Vagina (tissue), 2 donors: ENCODE measurements at regions of chr14 and their contacts with region 1.

Region 1: GRCh38 chr14:59407246-59408010 is 57.8 kb downstream of the GPR135 start:
- DNase-seq: no peak
- H3K4me3 ChIP-seq: no peak overlapping the region
- H3K27ac ChIP-seq: peak overlapping the region; percentile 68
- H3K4me1 ChIP-seq: peaks cover 15% of the 10 kb centered on the region
- H3K27me3 ChIP-seq: no peaks in the 10 kb centered on the region
- CTCF ChIP-seq: no peak
- POLR2A ChIP-seq: no peak

Region 2: GRCh38 chr14:59262717-59263454 is 144.5 kb before region 1 on chr14:
- intact Hi-C with region 1: no loop called
- DNase-seq: no peak
- H3K4me3 ChIP-seq: no peak overlapping the region
- H3K27ac ChIP-seq: no peak overlapping the region
- H3K4me1 ChIP-seq: peaks cover 8% of the 10 kb centered on the region
- H3K27me3 ChIP-seq: no peaks in the 10 kb centered on the region
- CTCF ChIP-seq: no peak
- POLR2A ChIP-seq: no peak

Region 3: DNA sequence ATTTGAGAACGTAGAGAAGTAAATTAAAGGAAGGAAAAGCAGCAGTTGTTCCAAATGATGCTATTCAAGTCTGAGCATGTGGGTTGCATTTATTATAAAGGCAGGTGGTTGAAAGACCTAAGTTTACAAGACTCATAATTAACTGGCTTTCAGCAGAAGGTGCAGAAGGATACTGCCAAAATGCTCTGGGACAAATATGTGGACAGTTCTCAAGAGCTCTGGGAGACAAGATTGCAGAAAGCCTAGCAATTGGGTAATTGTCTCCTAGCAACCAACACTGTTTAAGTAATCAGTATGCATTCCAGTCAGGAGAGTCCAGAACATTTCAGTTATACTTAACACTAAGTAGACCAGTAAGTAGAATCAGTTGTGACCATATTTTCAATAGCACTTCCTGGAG is 73.8 kb before region 1 on chr14:
- intact Hi-C with region 1: loop called (anchors 10 kb)
- DNase-seq: no peak
- H3K4me3 ChIP-seq: no peak overlapping the region
- H3K27ac ChIP-seq: peak overlapping the region; percentile 61
- H3K4me1 ChIP-seq: peaks cover 45% of the 10 kb centered on the region
- H3K27me3 ChIP-seq: no peaks in the 10 kb centered on the region
- CTCF ChIP-seq: no peak
- POLR2A ChIP-seq: no peak

Region 4: GRCh38 chr14:59374048-59374447 is 33.4 kb before region 1 on chr14:
- intact Hi-C with region 1: no loop called
- DNase-seq: no peak
- H3K4me3 ChIP-seq: no peak overlapping the region
- H3K27ac ChIP-seq: no peak overlapping the region
- H3K4me1 ChIP-seq: peaks cover 22% of the 10 kb centered on the region
- H3K27me3 ChIP-seq: no peaks in the 10 kb centered on the region
- CTCF ChIP-seq: no peak
- POLR2A ChIP-seq: no peak